OCI-LY7 (cell line): ENCODE measurements at regions of chr19 and their contacts with region 1.

Region 1: DNA sequence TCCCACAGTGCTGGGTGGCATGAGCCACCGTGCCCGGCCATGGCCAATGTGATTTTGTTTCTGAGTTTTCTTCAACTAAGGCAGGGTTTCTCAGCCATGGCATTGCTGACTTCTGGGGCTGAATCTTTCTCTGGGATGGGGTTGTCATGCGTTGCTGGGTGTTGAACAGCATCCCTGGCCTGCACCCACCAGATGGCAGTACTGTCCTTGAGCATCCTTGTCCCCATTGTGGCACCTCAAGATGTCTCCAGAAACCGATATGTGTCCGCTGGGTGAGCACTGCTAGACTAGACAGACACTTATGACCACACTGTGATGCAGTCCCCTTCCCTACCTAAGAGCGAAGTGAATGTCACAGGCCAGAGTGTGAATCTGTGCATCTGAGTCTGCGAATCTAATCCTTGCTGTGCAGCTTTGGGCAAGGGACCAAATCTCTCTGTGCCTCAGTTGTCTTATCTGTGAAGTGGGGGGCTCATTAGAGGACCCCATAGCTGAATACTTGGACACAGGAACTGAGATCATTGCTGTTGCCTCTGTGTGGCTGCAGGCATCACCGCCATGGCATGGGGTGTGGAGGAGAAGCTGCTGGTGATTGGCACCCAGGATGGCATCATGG is 50.3 kb upstream of the SIN3B start:
- DNase-seq: peak; percentile 78
- H3K4me3 ChIP-seq: no peak overlapping the region
- H3K27ac ChIP-seq: no peak overlapping the region
- H3K4me1 ChIP-seq: no peaks in the 10 kb centered on the region
- CTCF ChIP-seq: peak; percentile 85

Region 2: GRCh38 chr19:16969127-16969526 is 190.2 kb after region 1 on chr19:
- CTCF ChIA-PET with region 1: no interaction called
- POLR2A ChIA-PET with region 1: no interaction called
- intact Hi-C with region 1: loop called (anchors 2 kb)
- DNase-seq: peak; percentile 57
- H3K4me3 ChIP-seq: no peak overlapping the region
- H3K27ac ChIP-seq: no peak overlapping the region
- H3K4me1 ChIP-seq: no peaks in the 10 kb centered on the region
- CTCF ChIP-seq: peak; percentile 77

Region 3: GRCh38 chr19:17052439-17053210 is 273.7 kb after region 1 on chr19:
- CTCF ChIA-PET with region 1: no interaction called
- POLR2A ChIA-PET with region 1: no interaction called
- intact Hi-C with region 1: loop called (anchors 5 kb)
- DNase-seq: peak; percentile 44
- H3K4me3 ChIP-seq: no peak overlapping the region
- H3K27ac ChIP-seq: no peak overlapping the region
- H3K4me1 ChIP-seq: no peaks in the 10 kb centered on the region
- CTCF ChIP-seq: peak; percentile 73